ENCODE measurements at regions of chrX and their contacts with region 1.

Region 1: GRCh38 chrX:134807039-134807731 is 148.9 kb upstream of the PLAC1 start:
- DNase-seq: peak; percentile 85 to 90
- H3K4me3 ChIP-seq: peak overlapping the region; percentile 49
- H3K4me3 Mint-ChIP-seq: peak overlapping the region; percentile 87
- H3K27ac Mint-ChIP-seq: peak overlapping the region; percentile 90
- H3K4me1 ChIP-seq: peaks cover 22% of the 10 kb centered on the region
- H3K4me1 Mint-ChIP-seq: peaks cover 25% of the 10 kb centered on the region
- H3K27me3 ChIP-seq: no peaks in the 10 kb centered on the region
- H3K27me3 Mint-ChIP-seq: no peaks in the 10 kb centered on the region
- CTCF ChIP-seq: no peak

Region 2: GRCh38 chrX:134622056-134622812 is 185.0 kb before region 1 on chrX:
- CTCF ChIA-PET with region 1: no interaction called
- POLR2A ChIA-PET with region 1: no interaction called
- intact Hi-C with region 1: no loop called
- DNase-seq: no peak
- H3K4me3 ChIP-seq: no peak overlapping the region
- H3K4me3 Mint-ChIP-seq: no peak overlapping the region
- H3K27ac Mint-ChIP-seq: no peak overlapping the region
- H3K4me1 ChIP-seq: peaks cover 11% of the 10 kb centered on the region
- H3K4me1 Mint-ChIP-seq: no peaks in the 10 kb centered on the region
- H3K27me3 ChIP-seq: no peaks in the 10 kb centered on the region
- H3K27me3 Mint-ChIP-seq: no peaks in the 10 kb centered on the region
- CTCF ChIP-seq: no peak

Region 3: GRCh38 chrX:134886201-134886600 is 79.0 kb after region 1 on chrX:
- CTCF ChIA-PET with region 1: no interaction called
- POLR2A ChIA-PET with region 1: no interaction called
- intact Hi-C with region 1: loop called (anchors 5 kb)
- DNase-seq: no peak
- H3K4me3 ChIP-seq: no peak overlapping the region
- H3K4me3 Mint-ChIP-seq: peak overlapping the region; percentile 18
- H3K27ac Mint-ChIP-seq: peak overlapping the region; percentile 51
- H3K4me1 ChIP-seq: peaks cover 14% of the 10 kb centered on the region
- H3K4me1 Mint-ChIP-seq: peaks cover 23% of the 10 kb centered on the region
- H3K27me3 ChIP-seq: no peaks in the 10 kb centered on the region
- H3K27me3 Mint-ChIP-seq: no peaks in the 10 kb centered on the region
- CTCF ChIP-seq: no peak

Region 4: GRCh38 chrX:135003876-135004623 is 196.9 kb after region 1 on chrX:
- CTCF ChIA-PET with region 1: no interaction called
- POLR2A ChIA-PET with region 1: no interaction called
- intact Hi-C with region 1: loop called (anchors 10 kb)
- DNase-seq: peak; percentile 91 to 93
- H3K4me3 ChIP-seq: peak overlapping the region; percentile 53
- H3K4me3 Mint-ChIP-seq: peak overlapping the region; percentile 80
- H3K27ac Mint-ChIP-seq: peak overlapping the region; percentile 63
- H3K4me1 ChIP-seq: peaks cover 7% of the 10 kb centered on the region; the same call in 1 of the 2 replicates
- H3K4me1 Mint-ChIP-seq: peaks cover 6% of the 10 kb centered on the region
- H3K27me3 ChIP-seq: no peaks in the 10 kb centered on the region
- H3K27me3 Mint-ChIP-seq: no peaks in the 10 kb centered on the region
- CTCF ChIP-seq: no peak

Measured in Caco-2 (cell line).